PC-9 (cell line): ENCODE measurements at regions of chr6 and their contacts with region 1.

Region 1: DNA sequence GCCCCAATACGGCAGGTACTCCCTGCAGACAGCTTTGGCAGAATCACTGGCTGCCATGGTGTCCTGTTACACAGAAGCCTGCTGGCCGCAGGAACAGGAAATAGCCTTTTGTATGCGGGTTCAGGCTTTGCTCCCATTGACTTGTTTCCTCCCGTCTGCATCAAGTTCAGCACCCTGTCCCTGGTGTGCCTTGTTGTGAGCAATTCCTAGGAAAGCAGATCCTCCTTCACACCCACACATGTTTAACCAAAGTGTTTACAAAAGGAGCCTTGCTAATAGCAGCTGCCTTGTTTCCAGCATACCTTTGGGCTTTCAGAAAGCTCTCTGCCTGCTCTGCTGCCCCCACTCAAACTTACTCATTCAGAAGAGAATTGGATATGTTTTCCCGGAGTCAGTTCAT is 127.2 kb upstream of the SUPT3H start:
- DNase-seq: peak in 1 of 2 experiments; percentile 56
- H3K4me3 ChIP-seq: no peak overlapping the region
- H3K27ac ChIP-seq: no peak overlapping the region
- H3K4me1 ChIP-seq: peaks cover 32% of the 10 kb centered on the region
- H3K27me3 ChIP-seq: no peaks in the 10 kb centered on the region
- CTCF ChIP-seq: no peak

Region 2: DNA sequence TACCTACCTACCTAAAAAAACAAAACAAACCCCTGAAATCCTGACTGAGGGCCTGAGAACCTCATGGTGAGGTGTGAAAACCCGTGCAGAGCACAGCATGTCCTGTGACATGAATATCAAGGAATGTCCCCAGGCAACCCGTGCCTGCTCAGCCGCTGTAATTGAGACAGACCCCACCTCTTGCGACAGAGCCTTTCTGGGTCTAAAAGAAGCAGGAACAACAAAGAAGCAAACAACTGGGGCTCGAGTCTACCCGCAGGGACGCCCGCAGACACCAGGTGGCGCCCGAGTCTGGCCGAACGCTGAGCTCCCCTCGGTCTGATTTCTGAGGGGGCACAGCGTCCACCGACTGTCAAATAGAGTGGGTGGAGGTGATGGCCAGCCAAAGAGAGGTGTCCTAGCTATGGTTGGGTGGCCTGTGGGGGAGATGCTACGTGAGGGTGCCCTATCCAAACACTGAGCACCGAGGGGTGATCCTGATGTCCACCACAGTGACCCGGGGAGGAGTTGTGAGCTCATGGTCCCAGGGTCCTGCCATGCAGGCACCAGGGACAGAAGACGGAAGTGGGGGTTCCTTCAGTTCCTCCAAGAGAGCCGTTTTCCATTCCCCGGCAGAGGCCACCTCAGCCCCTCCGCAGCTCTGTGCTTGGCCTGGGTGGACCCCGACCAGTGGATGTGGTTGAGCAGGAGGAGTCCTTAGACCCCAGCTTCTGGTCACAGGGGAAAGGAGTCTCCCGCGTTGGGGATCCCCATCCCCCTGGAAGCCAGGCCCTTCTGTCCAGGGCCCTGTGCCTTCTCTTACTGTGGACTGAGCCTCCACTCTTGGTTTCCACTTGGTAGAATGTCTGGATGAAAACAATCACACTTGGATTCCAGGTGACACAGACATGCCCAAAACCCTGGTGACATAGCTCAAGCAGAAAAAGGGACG is 849.3 kb before region 1 on chr6:
- CTCF ChIA-PET with region 1: no interaction called
- POLR2A ChIA-PET with region 1: no interaction called
- intact Hi-C with region 1: loop called (anchors 1 kb)
- DNase-seq: peak; percentile 77 to 79
- H3K4me3 ChIP-seq: no peak overlapping the region
- H3K27ac ChIP-seq: peak overlapping the region; percentile 34; the same call in 1 of the 2 replicates
- H3K4me1 ChIP-seq: peaks cover 10% of the 10 kb centered on the region; the same call in 1 of the 2 replicates
- H3K27me3 ChIP-seq: no peaks in the 10 kb centered on the region
- CTCF ChIP-seq: peak; percentile 98

Region 3: GRCh38 chr6:45297320-45297719 is 207.6 kb before region 1 on chr6:
- CTCF ChIA-PET with region 1: no interaction called
- POLR2A ChIA-PET with region 1: no interaction called
- intact Hi-C with region 1: no loop called
- DNase-seq: no peak
- H3K4me3 ChIP-seq: no peak overlapping the region
- H3K27ac ChIP-seq: no peak overlapping the region
- H3K4me1 ChIP-seq: no peaks in the 10 kb centered on the region
- H3K27me3 ChIP-seq: no peaks in the 10 kb centered on the region
- CTCF ChIP-seq: no peak

Region 4: DNA sequence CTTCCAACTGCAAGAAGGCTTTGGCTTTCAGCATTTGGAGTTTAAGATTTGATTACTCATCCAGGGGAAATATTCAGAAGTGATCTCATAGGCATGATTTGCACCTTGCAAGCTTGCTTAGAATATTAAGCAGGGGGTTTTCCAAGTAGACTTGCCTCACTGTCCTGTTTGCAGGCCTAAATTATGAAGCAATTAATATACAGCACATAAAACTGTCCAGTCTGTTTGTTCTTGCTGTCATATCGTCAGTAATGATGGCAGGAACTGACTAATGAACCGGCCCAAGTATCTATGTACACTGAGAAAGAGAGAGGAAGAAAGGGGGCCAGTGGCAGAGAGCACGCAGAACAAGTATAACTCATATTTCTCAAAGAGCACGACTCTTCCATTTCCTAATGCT is 85.3 kb after region 1 on chr6:
- CTCF ChIA-PET with region 1: no interaction called
- POLR2A ChIA-PET with region 1: no interaction called
- intact Hi-C with region 1: loop called (anchors 1 kb)
- DNase-seq: peak in 1 of 2 experiments; percentile 87
- H3K4me3 ChIP-seq: no peak overlapping the region
- H3K27ac ChIP-seq: peak overlapping the region; percentile 88
- H3K4me1 ChIP-seq: peaks cover 62% of the 10 kb centered on the region
- H3K27me3 ChIP-seq: no peaks in the 10 kb centered on the region
- CTCF ChIP-seq: no peak

Region 5: GRCh38 chr6:45677381-45678284 is 172.7 kb after region 1 on chr6:
- CTCF ChIA-PET with region 1: no interaction called
- POLR2A ChIA-PET with region 1: no interaction called
- intact Hi-C with region 1: no loop called
- DNase-seq: no peak
- H3K4me3 ChIP-seq: no peak overlapping the region
- H3K27ac ChIP-seq: no peak overlapping the region
- H3K4me1 ChIP-seq: no peaks in the 10 kb centered on the region
- H3K27me3 ChIP-seq: no peaks in the 10 kb centered on the region
- CTCF ChIP-seq: no peak

Region 6: GRCh38 chr6:45942953-45943352 is 438.0 kb after region 1 on chr6:
- CTCF ChIA-PET with region 1: no interaction called
- POLR2A ChIA-PET with region 1: no interaction called
- intact Hi-C with region 1: no loop called
- DNase-seq: no peak
- H3K4me3 ChIP-seq: no peak overlapping the region
- H3K27ac ChIP-seq: no peak overlapping the region
- H3K4me1 ChIP-seq: no peaks in the 10 kb centered on the region
- H3K27me3 ChIP-seq: no peaks in the 10 kb centered on the region; the same call in 1 of the 2 replicates
- CTCF ChIP-seq: no peak